ENCODE measurements at regions of chr19 and their contacts with region 1.

Region 1: GRCh38 chr19:5031231-5032100 is 62.6 kb downstream of the KDM4B start:
- DNase-seq: peak; percentile 83
- H3K4me3 Mint-ChIP-seq: no peak overlapping the region
- H3K27ac Mint-ChIP-seq: no peak overlapping the region
- H3K4me1 Mint-ChIP-seq: no peaks in the 10 kb centered on the region
- H3K27me3 Mint-ChIP-seq: no peaks in the 10 kb centered on the region

Region 2: GRCh38 chr19:5001615-5002014 is 29.9 kb before region 1 on chr19:
- CTCF ChIA-PET with region 1: interaction called, 22 read pairs
- POLR2A ChIA-PET with region 1: interaction called, 4 read pairs
- DNase-seq: peak; percentile 35
- H3K4me3 Mint-ChIP-seq: no peak overlapping the region
- H3K27ac Mint-ChIP-seq: no peak overlapping the region
- H3K4me1 Mint-ChIP-seq: no peaks in the 10 kb centered on the region
- H3K27me3 Mint-ChIP-seq: no peaks in the 10 kb centered on the region

Measured in activated CD4-positive, alpha-beta memory T cell treated with anti-CD3 and anti-CD28 coated beads, Interleukin-2, amount 10 ng/mL, durations not matched to agents 7 days and 5 days (primary cell).